ENCODE measurements at regions of chr1 and their contacts with region 1.

Region 1: GRCh38 chr1:31593770-31594632 is 17.7 kb downstream of the TINAGL1 start:
- DNase-seq: no peak
- H3K4me3 ChIP-seq: no peak overlapping the region
- H3K27me3 ChIP-seq: no peaks in the 10 kb centered on the region
- CTCF ChIP-seq: peak; percentile 95

Region 2: DNA sequence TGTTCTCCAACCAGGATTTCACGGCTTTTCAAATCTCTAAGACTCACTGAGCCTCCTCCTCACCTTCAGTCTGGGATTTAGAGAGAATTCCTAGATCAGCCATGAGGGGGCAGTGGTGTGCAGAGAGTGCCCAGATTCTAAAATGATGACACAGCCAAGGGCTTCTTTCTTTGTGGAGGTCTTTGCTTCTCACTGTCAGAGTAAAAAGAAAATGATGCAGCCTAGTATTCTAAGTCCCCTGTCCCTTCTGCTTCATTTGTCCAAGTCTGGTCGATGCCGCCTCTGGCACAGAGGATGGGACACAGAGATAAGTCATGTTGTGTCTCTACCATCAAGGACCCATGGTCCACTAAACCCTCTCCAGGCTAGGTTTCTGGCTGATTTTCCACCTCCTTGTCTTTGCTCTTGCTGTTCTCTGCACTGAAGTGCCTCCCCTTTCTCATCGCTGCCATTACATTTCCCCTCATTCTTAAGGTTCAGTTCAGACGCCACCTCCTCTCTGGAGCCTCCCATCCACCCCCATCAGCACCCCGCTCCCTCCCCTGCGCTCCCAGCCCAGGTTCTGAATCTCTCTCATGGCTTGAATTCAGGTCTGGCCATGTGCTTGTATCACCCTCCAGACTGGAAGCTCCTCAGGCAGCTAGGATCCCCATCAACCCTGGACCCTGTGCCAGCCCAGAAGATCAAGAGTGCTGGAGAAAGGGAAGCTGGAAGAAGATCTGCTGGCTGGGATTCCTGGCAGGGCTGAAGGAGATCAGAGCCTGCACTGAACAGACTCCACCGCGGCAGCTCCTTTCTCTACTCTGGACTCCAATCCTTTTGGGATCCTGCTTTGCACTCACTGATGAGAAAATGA is 29.6 kb before region 1 on chr1:
- CTCF ChIA-PET with region 1: interaction called, 366 read pairs
- POLR2A ChIA-PET with region 1: no interaction called
- DNase-seq: no peak
- H3K4me3 ChIP-seq: no peak overlapping the region
- H3K27me3 ChIP-seq: peaks cover 1% of the 10 kb centered on the region; the same call in 1 of the 2 replicates
- CTCF ChIP-seq: peak; percentile 80

Region 3: GRCh38 chr1:31660871-31661455 is 67.0 kb after region 1 on chr1:
- CTCF ChIA-PET with region 1: no interaction called
- POLR2A ChIA-PET with region 1: no interaction called
- DNase-seq: no peak
- H3K4me3 ChIP-seq: no peak overlapping the region
- H3K27me3 ChIP-seq: no peaks in the 10 kb centered on the region
- CTCF ChIP-seq: no peak

Region 4: DNA sequence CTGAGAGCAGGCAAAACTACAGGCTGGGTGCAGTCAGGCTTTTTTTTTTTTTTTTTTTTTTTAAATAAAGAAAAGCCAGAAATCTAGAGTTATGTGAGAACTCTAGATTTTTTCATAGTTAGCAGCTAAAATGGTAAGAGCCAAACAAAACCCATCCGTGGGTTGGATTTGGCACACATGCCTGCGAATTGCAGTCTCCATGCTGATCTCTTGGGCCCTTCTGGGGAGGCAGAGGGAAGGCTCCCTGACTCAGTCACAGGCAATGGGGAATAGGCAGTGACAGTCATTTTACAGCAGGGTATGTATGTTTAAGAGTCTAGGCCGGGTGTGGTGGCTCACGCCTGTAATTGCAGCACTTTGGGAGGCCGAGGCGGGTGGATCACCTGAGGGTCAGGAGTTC is 588.1 kb after region 1 on chr1:
- CTCF ChIA-PET with region 1: no interaction called
- POLR2A ChIA-PET with region 1: interaction called, 11 read pairs
- DNase-seq: no peak
- H3K4me3 ChIP-seq: peak overlapping the region; percentile 66
- H3K27me3 ChIP-seq: no peaks in the 10 kb centered on the region
- CTCF ChIP-seq: no peak